ENCODE measurements at regions of chr2 and their contacts with region 1.

Region 1: GRCh38 chr2:27016801-27017325 is 15.9 kb upstream of the TMEM214 start:
- DNase-seq: peak; percentile 68
- CTCF ChIP-seq: peak; percentile 46

Region 2: DNA sequence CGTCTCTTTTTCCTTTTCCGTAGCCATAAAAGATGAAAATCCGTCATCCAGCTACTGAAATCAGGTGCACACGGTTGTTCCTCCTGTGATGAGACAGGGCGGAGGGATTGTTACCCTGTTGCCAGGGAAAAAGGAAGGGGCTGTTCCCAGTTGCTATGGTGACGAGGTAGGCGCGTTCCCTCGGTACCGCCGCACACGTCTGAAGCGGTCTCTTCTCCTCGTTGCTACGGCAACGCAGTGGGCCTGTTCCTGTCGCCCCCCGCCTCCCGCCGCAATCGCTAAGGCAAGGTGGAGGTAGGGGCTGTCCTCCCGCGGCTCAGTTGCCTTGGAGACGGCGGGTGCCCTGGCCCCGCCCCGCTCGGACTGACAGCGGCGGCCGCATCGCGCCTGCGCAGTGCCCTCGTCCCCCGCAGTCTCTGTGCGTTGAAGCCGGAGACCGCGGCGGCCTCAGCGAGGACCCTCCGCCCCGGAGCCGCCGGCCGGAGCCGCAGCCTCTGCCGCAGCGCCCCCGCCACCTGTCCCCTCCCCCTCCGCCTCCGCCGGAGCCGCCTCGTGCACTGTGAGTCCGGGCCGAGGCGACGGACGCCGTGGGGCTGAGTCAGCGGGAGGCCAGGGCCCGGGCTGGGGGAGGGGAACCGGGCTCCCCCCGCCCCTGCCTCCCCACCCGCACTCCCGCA is 46.5 kb before region 1 on chr2 and contains the start of gene MAPRE3:
- CTCF ChIA-PET with region 1: interaction called, 244 read pairs
- POLR2A ChIA-PET with region 1: no interaction called
- DNase-seq: peak; percentile 95
- CTCF ChIP-seq: no peak

Region 3: GRCh38 chr2:26982102-26982742 is 34.6 kb before region 1 on chr2:
- CTCF ChIA-PET with region 1: interaction called, 14 read pairs
- POLR2A ChIA-PET with region 1: no interaction called
- DNase-seq: peak; percentile 41
- CTCF ChIP-seq: no peak

Region 4: GRCh38 chr2:27032495-27033252 is 15.8 kb after region 1 on chr2 and contains the start of gene TMEM214:
- CTCF ChIA-PET with region 1: interaction called, 11 read pairs
- POLR2A ChIA-PET with region 1: no interaction called
- DNase-seq: peak; percentile 96
- CTCF ChIP-seq: no peak

Region 5: DNA sequence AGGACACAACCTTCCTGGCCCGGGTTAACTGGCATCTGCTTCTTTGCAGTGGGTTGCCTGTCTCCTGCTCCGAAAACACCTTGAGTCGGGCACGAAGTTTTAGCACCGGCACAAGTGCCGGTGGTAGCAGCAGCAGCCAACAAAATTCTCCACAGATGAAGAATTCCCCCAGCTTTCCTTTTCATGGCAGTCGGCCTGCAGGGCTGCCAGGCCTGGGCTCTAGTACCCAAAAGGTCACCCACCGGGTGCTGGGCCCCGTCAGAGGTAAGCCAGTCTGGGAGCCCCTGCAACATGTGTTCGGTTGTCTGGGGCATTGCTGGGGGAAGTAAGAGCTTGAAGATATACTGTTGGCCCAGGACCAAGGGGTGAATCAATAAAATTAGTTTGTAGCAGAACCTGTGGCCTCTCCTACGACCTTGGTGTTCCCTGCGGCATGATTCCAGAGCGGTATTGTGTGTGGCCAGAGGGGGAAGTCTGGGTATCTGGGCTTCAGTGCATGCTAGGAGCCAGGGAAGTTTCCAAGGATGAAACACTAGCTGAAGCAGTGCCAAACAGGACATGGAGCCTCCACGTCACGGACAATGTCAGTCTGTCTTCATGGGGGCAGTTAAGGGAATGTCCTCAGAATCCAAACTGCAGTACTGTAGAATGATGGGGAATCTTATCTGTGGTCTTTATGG is 42.4 kb after region 1 on chr2:
- CTCF ChIA-PET with region 1: no interaction called
- POLR2A ChIA-PET with region 1: no interaction called
- DNase-seq: no peak
- CTCF ChIP-seq: no peak